Naive thymus-derived CD4-positive, alpha-beta T cell (primary cell): ENCODE measurements at regions of chr6 and their contacts with region 1.

Region 1: GRCh38 chr6:32700391-32701040 is 34.1 kb upstream of the HLA-DQB1 start:
- DNase-seq: peak in 6 of 9 donors; percentile 15 to 54 (median 38)
- ATAC-seq: peak; percentile 68
- H3K4me3 ChIP-seq: no peak overlapping the region
- H3K4me3 Mint-ChIP-seq: peak overlapping the region in 7 of 10 donors; percentile 25 to 61 (median 46)
- H3K27ac ChIP-seq: no peak overlapping the region
- H3K27ac Mint-ChIP-seq: no peak overlapping the region
- H3K4me1 ChIP-seq: no peaks in the 10 kb centered on the region
- H3K4me1 Mint-ChIP-seq: peaks cover 0 to 9% (median 5%) of the 10 kb centered on the region in 7 donors
- H3K27me3 ChIP-seq: no peaks in the 10 kb centered on the region
- H3K27me3 Mint-ChIP-seq: peaks cover 26 to 69% (median 43%) of the 10 kb centered on the region in 5 donors

Region 2: GRCh38 chr6:32424589-32425300 is 275.8 kb before region 1 on chr6:
- CTCF ChIA-PET with region 1: interaction called, 10 read pairs
- POLR2A ChIA-PET with region 1: no interaction called
- intact Hi-C with region 1: no loop called
- DNase-seq: no peak
- ATAC-seq: no peak
- H3K4me3 ChIP-seq: no peak overlapping the region
- H3K4me3 Mint-ChIP-seq: no peak overlapping the region
- H3K27ac ChIP-seq: no peak overlapping the region
- H3K27ac Mint-ChIP-seq: no peak overlapping the region
- H3K4me1 ChIP-seq: no peaks in the 10 kb centered on the region
- H3K4me1 Mint-ChIP-seq: no peaks in the 10 kb centered on the region
- H3K27me3 ChIP-seq: peaks cover 3 to 4% of the 10 kb centered on the region in 2 donors
- H3K27me3 Mint-ChIP-seq: peaks cover 0 to 58% (median 18%) of the 10 kb centered on the region in 5 donors

Region 3: GRCh38 chr6:32738126-32738525 is 37.6 kb after region 1 on chr6:
- CTCF ChIA-PET with region 1: no interaction called
- POLR2A ChIA-PET with region 1: no interaction called
- intact Hi-C with region 1: no loop called
- DNase-seq: no peak
- ATAC-seq: no peak
- H3K4me3 ChIP-seq: no peak overlapping the region
- H3K4me3 Mint-ChIP-seq: no peak overlapping the region
- H3K27ac ChIP-seq: no peak overlapping the region
- H3K27ac Mint-ChIP-seq: no peak overlapping the region
- H3K4me1 ChIP-seq: no peaks in the 10 kb centered on the region
- H3K4me1 Mint-ChIP-seq: peaks cover 0 to 4% (median 0%) of the 10 kb centered on the region in 7 donors
- H3K27me3 ChIP-seq: peaks cover 0 to under 1% of the 10 kb centered on the region in 2 donors
- H3K27me3 Mint-ChIP-seq: peaks cover 20 to 43% (median 32%) of the 10 kb centered on the region in 5 donors

Region 4: DNA sequence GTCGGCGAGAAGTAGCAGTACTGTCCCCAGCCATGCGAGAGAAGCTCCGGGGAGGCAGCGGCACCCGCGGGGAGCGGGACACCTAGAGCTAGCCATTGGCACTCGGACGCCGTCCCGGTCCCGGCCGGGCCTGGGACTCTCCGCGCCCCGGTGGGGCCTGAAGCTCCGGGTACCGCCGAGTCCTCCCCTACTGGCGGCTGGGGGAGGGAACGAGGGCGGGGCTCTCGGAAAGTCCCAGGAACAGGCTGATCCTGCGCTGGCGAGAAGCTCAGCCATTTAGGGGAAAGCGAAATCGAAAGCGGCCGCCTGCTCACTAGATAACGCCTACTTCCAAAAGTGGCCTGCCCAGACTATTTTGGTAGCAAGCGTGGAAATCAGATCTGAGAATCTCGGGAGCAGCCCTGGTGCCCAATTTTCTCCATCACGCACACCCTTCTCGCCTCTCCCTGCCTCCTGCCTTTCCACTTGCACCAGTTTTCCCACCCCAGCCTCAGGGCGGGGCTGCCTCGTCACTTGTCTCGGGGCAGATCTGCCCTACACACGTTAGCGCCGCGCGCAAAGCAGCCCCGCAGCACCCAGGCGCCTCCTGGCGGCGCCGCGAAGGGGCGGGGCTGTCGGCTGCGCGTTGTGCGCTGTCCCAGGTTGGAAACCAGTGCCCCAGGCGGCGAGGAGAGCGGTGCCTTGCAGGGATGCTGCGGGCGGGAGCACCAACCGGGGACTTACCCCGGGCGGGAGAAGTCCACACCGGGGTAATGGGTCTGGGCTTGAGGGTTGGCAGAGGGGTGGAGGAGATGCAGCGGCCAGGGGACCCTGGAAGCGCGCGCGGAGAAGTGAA is 153.2 kb after region 1 on chr6 and contains the starts of genes PSMB9 and TAP1:
- CTCF ChIA-PET with region 1: no interaction called
- POLR2A ChIA-PET with region 1: no interaction called
- intact Hi-C with region 1: no loop called
- DNase-seq: peak; percentile 92 to 97 (median 94)
- ATAC-seq: peak; percentile 92
- H3K4me3 ChIP-seq: peak within 1 kb of the TSS; percentile 91
- H3K4me3 Mint-ChIP-seq: peak within 1 kb of the TSS; percentile 96 to 100 (median 100)
- H3K27ac ChIP-seq: peak within 1 kb of the TSS; percentile 100
- H3K27ac Mint-ChIP-seq: peak within 1 kb of the TSS; percentile 97 to 100 (median 100)
- H3K4me1 ChIP-seq: peaks cover 45 to 57% of the 10 kb centered on the region in 2 donors
- H3K4me1 Mint-ChIP-seq: peaks cover 61 to 80% (median 72%) of the 10 kb centered on the region in 7 donors
- H3K27me3 ChIP-seq: no peaks in the 10 kb centered on the region
- H3K27me3 Mint-ChIP-seq: no peaks in the 10 kb centered on the region
- total RNA-seq, gene PSMB9: 70.3 to 452 (median 90.5) TPM
- total RNA-seq, gene TAP1: 92.1 to 500 (median 103) TPM